Naive thymus-derived CD8-positive, alpha-beta T cell (primary cell): ENCODE measurements at regions of chr19 and their contacts with region 1.

Region 1: GRCh38 chr19:35612559-35613321 is at the start of gene HAUS5:
- DNase-seq: peak; percentile 92 to 97 (median 95)
- ATAC-seq: peak; percentile 91 to 94
- H3K4me3 Mint-ChIP-seq: peak within 1 kb of the TSS; percentile 82 to 92 (median 89)
- H3K27ac Mint-ChIP-seq: peak within 1 kb of the TSS; percentile 83 to 98 (median 93)
- H3K4me1 Mint-ChIP-seq: peaks cover 9 to 39% (median 28%) of the 10 kb centered on the region in 4 donors
- H3K27me3 Mint-ChIP-seq: no peaks in the 10 kb centered on the region
- polyA plus RNA-seq, gene HAUS5: 6.6 to 7.7 (median 7.2) TPM

Region 2: GRCh38 chr19:35628565-35629331 is 16.0 kb after region 1 on chr19 and contains the start of gene RBM42:
- POLR2A ChIA-PET with region 1: interaction called, 10 read pairs
- DNase-seq: peak; percentile 88 to 99 (median 99)
- ATAC-seq: peak; percentile 99
- H3K4me3 Mint-ChIP-seq: peak within 1 kb of the TSS; percentile 94 to 100 (median 98)
- H3K27ac Mint-ChIP-seq: peak within 1 kb of the TSS; percentile 92 to 100 (median 98)
- H3K4me1 Mint-ChIP-seq: peaks cover 18 to 30% (median 25%) of the 10 kb centered on the region in 4 donors
- H3K27me3 Mint-ChIP-seq: peaks cover 0 to 3% (median 0%) of the 10 kb centered on the region in 5 donors
- polyA plus RNA-seq, gene RBM42: 54.1 to 59.7 (median 58.0) TPM

Region 3: GRCh38 chr19:35648017-35648961 is 35.5 kb after region 1 on chr19 and contains the start of gene COX6B1:
- POLR2A ChIA-PET with region 1: interaction called, 24 read pairs
- DNase-seq: peak; percentile 75 to 96 (median 92)
- ATAC-seq: peak; percentile 74 to 77
- H3K4me3 Mint-ChIP-seq: peak within 1 kb of the TSS; percentile 93 to 100 (median 98)
- H3K27ac Mint-ChIP-seq: peak within 1 kb of the TSS; percentile 87 to 98 (median 96)
- H3K4me1 Mint-ChIP-seq: peaks cover 19 to 64% (median 47%) of the 10 kb centered on the region in 4 donors
- H3K27me3 Mint-ChIP-seq: no peaks in the 10 kb centered on the region
- polyA plus RNA-seq, gene COX6B1: 824 to 920 (median 852) TPM